SK-N-SH (cell line): ENCODE measurements at regions of chr2 and their contacts with region 1.

Region 1: DNA sequence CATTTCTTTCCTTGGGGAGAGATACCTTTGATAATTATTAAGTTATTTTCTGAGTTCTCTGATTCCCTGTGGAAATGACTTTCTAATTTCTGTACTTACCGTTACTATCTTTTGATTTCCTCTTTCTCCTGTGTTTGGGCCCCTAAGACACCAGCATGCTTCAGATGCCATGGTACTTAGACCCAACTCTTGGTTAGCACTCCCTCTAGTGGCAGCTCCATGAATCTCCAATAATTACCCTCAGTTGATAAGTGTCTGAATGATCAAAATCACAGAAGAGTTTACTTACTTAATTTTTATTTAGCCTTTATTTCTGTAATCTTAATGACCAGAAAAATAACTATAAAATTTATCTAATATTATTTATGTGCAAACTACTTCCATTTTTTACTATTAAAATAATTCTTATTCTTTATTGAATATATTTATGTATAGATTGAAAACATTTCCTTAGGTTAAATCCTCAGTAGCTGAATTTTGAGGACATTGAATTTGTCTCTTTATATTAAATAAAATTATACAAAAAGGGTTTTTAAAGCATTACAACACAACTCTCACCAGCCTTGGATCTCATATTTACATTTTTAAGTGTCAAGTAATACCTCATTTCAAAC is 300.4 kb downstream of the KCNS3 start:
- DNase-seq: peak; percentile 43
- H3K4me3 ChIP-seq: no peak overlapping the region; a peak in 1 of 4 replicates
- H3K27ac ChIP-seq: no peak overlapping the region
- H3K4me1 ChIP-seq: no peaks in the 10 kb centered on the region
- H3K27me3 ChIP-seq: peaks cover 7% of the 10 kb centered on the region; the same call in 1 of the 2 replicates
- CTCF ChIP-seq: peak; percentile 92
- EP300 ChIP-seq: no peak
- RAD21 ChIP-seq: peak; percentile 79

Region 2: GRCh38 chr2:17879101-17879912 is 299.5 kb before region 1 on chr2:
- CTCF ChIA-PET with region 1: interaction called, 11 read pairs
- POLR2A ChIA-PET with region 1: no interaction called
- DNase-seq: peak; percentile 72
- H3K4me3 ChIP-seq: peak overlapping the region; percentile 42 to 48; a peak in 3 of 4 replicates
- H3K27ac ChIP-seq: no peak overlapping the region
- H3K4me1 ChIP-seq: peaks cover 4 to 13% of the 10 kb centered on the region in 2 experiments; a peak in 2 of 4 replicates
- H3K27me3 ChIP-seq: peaks cover 68% of the 10 kb centered on the region
- CTCF ChIP-seq: no peak; the same call in 1 of the 2 replicates
- EP300 ChIP-seq: no peak
- RAD21 ChIP-seq: no peak